Sigmoid colon (tissue), 7 donors: ENCODE measurements at regions of chr17 and their contacts with region 1.

Region 1: GRCh38 chr17:50200457-50201275 is 765 bp downstream of the COL1A1 start:
- DNase-seq: peak; percentile 98
- H3K4me3 ChIP-seq: peak overlapping the region; percentile 69 to 93 (median 77)
- H3K27ac ChIP-seq: peak overlapping the region; percentile 87 to 99 (median 96)
- H3K4me1 ChIP-seq: peaks cover 0 to 83% (median 77%) of the 10 kb centered on the region in 4 donors
- H3K27me3 ChIP-seq: no peaks in the 10 kb centered on the region
- CTCF ChIP-seq: peak; percentile 100
- EP300 ChIP-seq: peak in 1 of 4 donors; percentile 2
- POLR2A ChIP-seq: no peak

Region 2: DNA sequence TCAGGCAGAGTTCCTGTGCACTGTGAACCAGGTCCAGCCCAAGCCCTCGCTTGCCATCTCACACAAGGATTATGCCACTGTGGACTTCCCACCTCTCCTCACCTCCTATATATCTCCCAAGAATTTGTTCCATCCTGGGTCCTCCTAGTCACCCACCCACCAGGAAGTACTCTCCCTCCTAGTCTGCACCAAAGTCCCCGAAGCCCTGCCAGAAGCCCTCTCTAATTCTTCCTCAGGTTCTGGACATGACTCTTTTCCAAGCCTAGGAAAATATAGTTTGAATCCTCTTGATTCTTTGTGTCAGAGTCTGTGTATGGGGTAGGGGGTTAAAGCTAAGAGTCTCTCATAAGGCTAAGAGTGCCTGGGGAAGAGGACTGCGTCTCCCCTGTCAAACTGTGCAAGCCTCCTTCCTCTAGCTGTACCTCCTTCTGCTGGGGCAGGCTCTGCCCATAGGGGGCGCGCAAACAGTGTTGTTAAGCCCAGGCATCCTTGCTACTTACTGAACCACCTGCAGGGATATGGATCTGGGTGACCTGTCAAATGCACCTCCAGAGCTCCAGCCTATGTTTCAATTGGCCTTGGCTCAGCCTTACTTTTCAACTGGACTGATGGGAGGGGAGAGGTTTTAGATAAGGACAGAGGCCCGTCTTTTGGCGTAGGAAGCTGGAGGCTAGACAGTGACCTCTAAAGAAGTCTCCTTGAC is 248.3 kb before region 1 on chr17:
- intact Hi-C with region 1: no loop called
- DNase-seq: peak; percentile 77
- H3K4me3 ChIP-seq: no peak overlapping the region
- H3K27ac ChIP-seq: no peak overlapping the region
- H3K4me1 ChIP-seq: no peaks in the 10 kb centered on the region
- H3K27me3 ChIP-seq: peaks cover 16 to 57% (median 36%) of the 10 kb centered on the region in 3 donors
- CTCF ChIP-seq: peak; percentile 28 to 72 (median 62)
- EP300 ChIP-seq: no peak
- POLR2A ChIP-seq: no peak

Region 3: DNA sequence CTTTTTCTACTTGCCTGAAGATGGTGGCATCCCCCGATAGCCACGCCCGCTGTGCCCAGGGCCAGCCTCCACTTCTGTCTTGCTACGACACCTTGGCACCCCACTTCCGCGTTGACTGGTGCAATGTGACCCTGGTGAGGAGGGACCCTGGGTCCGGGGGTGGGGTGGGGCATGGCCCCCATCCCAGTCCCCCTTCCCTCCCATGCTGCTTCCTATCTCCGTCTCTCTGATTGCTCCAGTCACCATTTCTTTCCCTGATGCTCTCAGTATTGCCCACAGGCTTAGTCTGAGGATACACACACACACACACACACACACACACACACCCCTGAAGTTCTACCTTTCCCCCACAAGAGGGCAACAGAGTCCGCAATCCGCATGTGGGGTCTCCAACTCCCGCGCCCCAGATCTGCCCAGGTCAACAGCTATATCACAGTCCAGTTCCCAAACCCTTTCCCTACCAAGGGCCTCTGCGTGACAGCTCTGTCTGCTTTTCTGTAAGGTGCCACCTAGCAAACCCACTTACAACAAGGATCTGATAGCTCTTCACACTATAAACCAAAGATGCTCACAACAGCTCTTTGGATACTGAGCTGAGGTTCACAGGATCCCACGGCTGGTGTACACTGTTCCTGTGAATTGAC is 31.4 kb before region 1 on chr17:
- intact Hi-C with region 1: loop called (anchors 2 kb)
- DNase-seq: no peak
- H3K4me3 ChIP-seq: no peak overlapping the region
- H3K27ac ChIP-seq: peak overlapping the region in 3 of 4 donors; percentile 42 to 53 (median 43)
- H3K4me1 ChIP-seq: peaks cover 2 to 67% (median 60%) of the 10 kb centered on the region in 4 donors
- H3K27me3 ChIP-seq: no peaks in the 10 kb centered on the region
- CTCF ChIP-seq: peak; percentile 78 to 100 (median 98)
- EP300 ChIP-seq: no peak
- POLR2A ChIP-seq: no peak

Region 4: DNA sequence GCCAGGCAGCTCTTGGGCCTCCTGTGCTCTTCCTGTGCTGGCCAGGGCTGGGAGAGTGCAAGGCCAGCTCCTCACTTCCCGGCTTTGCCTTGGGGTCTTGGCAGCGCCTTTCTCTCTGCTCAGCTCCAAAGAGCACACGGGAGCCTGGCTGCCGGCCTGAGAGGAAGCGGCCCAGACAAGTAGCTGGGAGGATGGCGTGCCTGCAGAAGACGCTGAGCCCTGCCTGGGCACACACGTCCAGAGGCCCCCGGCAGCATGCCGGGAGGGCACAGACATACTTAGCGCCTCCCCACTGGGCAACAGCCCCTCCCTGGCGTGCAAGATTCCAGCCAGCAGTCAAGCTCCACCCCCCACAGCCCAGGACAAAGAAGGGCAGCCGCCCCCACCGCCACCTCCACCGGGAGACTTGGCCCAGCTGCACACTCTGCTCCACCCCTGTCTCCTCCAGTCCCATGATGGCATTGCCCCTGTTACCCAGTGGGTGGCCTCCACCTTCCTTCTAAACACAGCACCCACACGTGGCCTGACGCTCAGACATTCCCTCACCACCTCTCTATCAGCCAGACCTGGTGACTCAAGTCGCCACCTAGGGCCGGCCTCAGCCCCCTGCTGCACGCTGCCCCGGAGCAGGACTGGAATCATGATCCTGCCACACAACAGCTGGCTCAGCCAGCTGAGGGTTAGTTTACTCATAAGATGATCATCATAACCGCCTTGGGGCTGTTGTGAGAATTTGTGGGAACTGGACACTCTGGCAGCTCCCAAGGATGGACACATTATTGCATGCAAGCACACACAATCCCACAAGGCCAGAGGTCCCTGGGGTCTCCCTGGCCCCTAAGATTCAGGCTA is 22.5 kb before region 1 on chr17:
- intact Hi-C with region 1: loop called (anchors 2 kb)
- DNase-seq: peak; percentile 95
- H3K4me3 ChIP-seq: peak overlapping the region in 3 of 4 donors; percentile 1 to 18 (median 4)
- H3K27ac ChIP-seq: peak overlapping the region; percentile 81 to 99 (median 88)
- H3K4me1 ChIP-seq: peaks cover 0 to 62% (median 51%) of the 10 kb centered on the region in 4 donors
- H3K27me3 ChIP-seq: no peaks in the 10 kb centered on the region
- CTCF ChIP-seq: peak; percentile 5 to 63 (median 48)
- EP300 ChIP-seq: peak in 2 of 4 donors; percentile 12 to 71
- POLR2A ChIP-seq: no peak

Region 5: GRCh38 chr17:50269477-50270434 is 69.1 kb after region 1 on chr17:
- intact Hi-C with region 1: loop called (anchors 1 kb)
- DNase-seq: peak; percentile 88
- H3K4me3 ChIP-seq: no peak overlapping the region
- H3K27ac ChIP-seq: peak overlapping the region; percentile 21 to 91 (median 70)
- H3K4me1 ChIP-seq: peaks cover 0 to 76% (median 66%) of the 10 kb centered on the region in 4 donors
- H3K27me3 ChIP-seq: no peaks in the 10 kb centered on the region
- CTCF ChIP-seq: peak; percentile 72 to 87 (median 82)
- EP300 ChIP-seq: no peak
- POLR2A ChIP-seq: no peak

Region 6: DNA sequence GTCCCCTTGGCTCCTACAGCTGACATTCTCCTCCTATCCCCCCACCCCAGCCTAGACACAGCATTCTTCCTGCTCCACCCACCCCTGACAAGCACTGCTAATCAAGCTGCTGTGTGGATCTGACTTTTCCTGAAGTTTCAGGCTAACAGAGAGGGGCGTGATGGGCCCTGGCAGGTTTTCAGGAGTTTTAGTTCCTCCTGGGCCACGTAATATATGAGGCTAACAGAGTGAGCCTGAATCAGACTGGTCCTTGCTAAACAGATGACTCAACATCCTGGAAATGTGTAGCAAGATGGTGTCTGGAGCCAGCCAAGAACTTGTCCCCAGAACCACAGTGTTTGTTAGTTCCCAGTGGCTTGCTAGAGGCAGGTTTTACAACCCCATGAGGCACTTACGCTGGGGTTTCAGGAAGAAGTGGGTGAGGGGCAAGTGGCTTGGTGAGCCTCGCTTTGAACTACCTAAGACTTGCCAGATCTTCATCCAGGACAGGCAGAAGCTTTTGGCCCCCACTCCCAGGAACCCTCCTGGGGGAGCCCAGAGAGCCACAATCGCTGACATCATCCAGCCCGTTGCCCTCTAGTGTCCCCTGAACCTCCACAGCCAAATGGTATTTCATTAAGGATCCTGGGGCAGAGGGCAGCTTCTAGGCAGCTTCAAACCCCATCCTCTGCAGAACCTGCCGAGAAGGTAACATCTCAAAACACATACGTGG is 89.5 kb after region 1 on chr17:
- intact Hi-C with region 1: loop called (anchors 1 kb)
- DNase-seq: peak; percentile 94
- H3K4me3 ChIP-seq: peak overlapping the region in 2 of 4 donors; percentile 9 to 12
- H3K27ac ChIP-seq: peak overlapping the region; percentile 84 to 89 (median 88)
- H3K4me1 ChIP-seq: peaks cover 0 to 37% (median 31%) of the 10 kb centered on the region in 4 donors
- H3K27me3 ChIP-seq: no peaks in the 10 kb centered on the region
- CTCF ChIP-seq: no peak
- EP300 ChIP-seq: peak in 3 of 4 donors; percentile 43 to 90 (median 77)
- POLR2A ChIP-seq: no peak

Region 7: DNA sequence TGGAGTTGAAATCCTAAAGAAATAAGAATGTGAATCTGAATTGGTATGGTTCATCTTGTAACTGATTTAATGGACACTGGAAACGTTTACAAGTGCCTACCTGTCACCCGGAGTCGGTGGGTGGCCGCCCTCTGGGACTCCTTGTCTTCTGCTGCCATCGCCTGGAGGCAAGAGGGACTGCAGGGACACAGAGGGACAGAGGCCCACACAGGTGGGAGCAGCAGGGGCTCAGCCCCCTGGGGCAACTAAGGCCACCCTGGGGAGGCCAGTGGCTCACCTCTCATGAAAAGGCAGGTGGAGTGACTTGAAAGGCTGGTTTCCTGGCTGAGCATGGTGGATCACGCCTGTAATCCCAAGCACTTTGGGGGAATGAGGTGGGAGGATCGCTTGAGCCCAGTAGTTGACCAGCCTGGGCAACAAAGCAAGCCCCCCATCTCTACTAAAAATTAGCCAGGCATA is 96.8 kb after region 1 on chr17:
- intact Hi-C with region 1: loop called (anchors 1 kb)
- DNase-seq: peak; percentile 91
- H3K4me3 ChIP-seq: no peak overlapping the region
- H3K27ac ChIP-seq: no peak overlapping the region
- H3K4me1 ChIP-seq: peaks cover 0 to 3% (median 2%) of the 10 kb centered on the region in 4 donors
- H3K27me3 ChIP-seq: no peaks in the 10 kb centered on the region
- CTCF ChIP-seq: peak; percentile 95 to 98 (median 96)
- EP300 ChIP-seq: no peak
- POLR2A ChIP-seq: no peak

Region 8: GRCh38 chr17:50312308-50312707 is 111.6 kb after region 1 on chr17:
- intact Hi-C with region 1: no loop called
- DNase-seq: no peak
- H3K4me3 ChIP-seq: no peak overlapping the region
- H3K27ac ChIP-seq: no peak overlapping the region
- H3K4me1 ChIP-seq: no peaks in the 10 kb centered on the region
- H3K27me3 ChIP-seq: peaks cover 0 to 15% (median 0%) of the 10 kb centered on the region in 3 donors
- CTCF ChIP-seq: no peak
- EP300 ChIP-seq: no peak
- POLR2A ChIP-seq: no peak

Region 9: GRCh38 chr17:50507871-50508572 is 307.4 kb after region 1 on chr17 and contains the start of gene MYCBPAP:
- intact Hi-C with region 1: no loop called
- DNase-seq: peak; percentile 92
- H3K4me3 ChIP-seq: peak within 1 kb of the TSS; percentile 47 to 69 (median 62)
- H3K27ac ChIP-seq: peak within 1 kb of the TSS; percentile 76 to 85 (median 79)
- H3K4me1 ChIP-seq: peaks cover 0 to 16% (median 8%) of the 10 kb centered on the region in 4 donors
- H3K27me3 ChIP-seq: no peaks in the 10 kb centered on the region
- CTCF ChIP-seq: no peak
- EP300 ChIP-seq: no peak
- POLR2A ChIP-seq: peak in 1 of 2 donors; percentile 12
- total RNA-seq, gene MYCBPAP: 0.36 to 2.5 (median 1.7) TPM